Right ventricle myocardium inferior (tissue), 1 donor: ENCODE measurements at regions of chr4 and their contacts with region 1.

Region 1: DNA sequence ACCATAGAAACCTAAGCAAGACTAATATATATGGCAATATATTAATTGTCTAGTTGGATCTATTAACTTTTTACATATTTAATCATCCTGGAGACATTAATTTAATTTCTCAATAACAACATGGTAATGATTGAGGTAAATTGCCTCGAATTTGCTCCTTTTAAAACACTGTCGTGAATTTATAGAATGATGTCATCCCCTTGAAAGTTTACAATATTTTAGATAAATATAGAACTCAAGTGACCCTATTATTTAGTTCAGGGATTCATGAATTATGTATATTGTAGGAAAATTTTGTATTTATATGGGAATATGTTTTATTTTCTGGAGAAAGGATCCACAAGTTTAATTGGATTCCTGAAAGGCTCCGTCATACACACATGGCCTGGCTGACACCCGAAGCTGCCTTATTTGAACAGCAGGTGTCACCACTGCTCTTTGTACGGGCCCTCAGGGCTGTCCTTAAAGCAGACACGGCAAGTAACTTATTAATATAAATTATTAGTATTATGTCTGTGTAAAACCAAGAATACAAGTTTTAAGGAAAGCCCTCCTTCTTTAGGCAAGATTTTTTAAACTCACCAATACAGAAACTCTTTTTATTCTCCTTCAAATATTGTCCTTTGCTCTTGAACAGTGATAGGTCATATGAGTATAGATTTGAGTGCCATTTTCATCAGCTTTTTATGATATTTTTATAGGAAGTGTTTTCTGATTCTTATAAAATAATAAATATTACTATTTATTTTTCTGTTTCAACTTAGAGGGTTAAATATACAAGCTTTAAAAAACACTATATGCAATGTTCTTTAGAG is 1.9 kb upstream of the PLRG1 start:
- DNase-seq: peak; percentile 78
- ATAC-seq: peak; percentile 69

Region 2: GRCh38 chr4:154622416-154622997 is 70.4 kb after region 1 on chr4:
- intact Hi-C with region 1: loop called (anchors 5 kb)
- DNase-seq: no peak
- ATAC-seq: no peak

Region 3: GRCh38 chr4:154779362-154779947 is 227.4 kb after region 1 on chr4:
- intact Hi-C with region 1: loop called (anchors 2 kb)
- DNase-seq: no peak
- ATAC-seq: no peak

Region 4: GRCh38 chr4:155371432-155372043 is 819.5 kb after region 1 on chr4:
- intact Hi-C with region 1: loop called (anchors 5 kb)
- DNase-seq: no peak
- ATAC-seq: no peak